ENCODE measurements at regions of chr2 and their contacts with region 1.

Region 1: GRCh38 chr2:171999604-172000469 is at the start of gene METAP1D:
- DNase-seq: peak; percentile 91
- ATAC-seq: peak; percentile 100
- H3K4me3 ChIP-seq: peak within 1 kb of the TSS; percentile 59 to 80 (median 66)
- H3K27ac ChIP-seq: peak within 1 kb of the TSS; percentile 82
- H3K4me1 ChIP-seq: peaks cover 21% of the 10 kb centered on the region
- H3K27me3 ChIP-seq: no peaks in the 10 kb centered on the region
- CTCF ChIP-seq: peak; percentile 36; the same call in 1 of the 2 replicates
- EP300 ChIP-seq: peak in 1 of 2 experiments; percentile 50; a peak in 1 of 4 replicates
- POLR2A ChIP-seq: peak; percentile 98
- RAD21 ChIP-seq: peak; percentile 89
- total RNA-seq, gene METAP1D: 14.0 and 14.7 TPM in 2 replicates

Region 2: GRCh38 chr2:171811245-171811628 is 188.6 kb before region 1 on chr2:
- CTCF ChIA-PET with region 1: no interaction called
- POLR2A ChIA-PET with region 1: no interaction called
- in situ Hi-C with region 1: no loop called
- intact Hi-C with region 1: no loop called
- DNase-seq: peak; percentile 26
- ATAC-seq: no peak
- H3K4me3 ChIP-seq: no peak overlapping the region
- H3K27ac ChIP-seq: no peak overlapping the region
- H3K4me1 ChIP-seq: peaks cover 24% of the 10 kb centered on the region
- H3K27me3 ChIP-seq: no peaks in the 10 kb centered on the region
- CTCF ChIP-seq: peak; percentile 74
- EP300 ChIP-seq: no peak
- POLR2A ChIP-seq: no peak
- RAD21 ChIP-seq: peak; percentile 54; the same call in 1 of the 2 replicates

Region 3: DNA sequence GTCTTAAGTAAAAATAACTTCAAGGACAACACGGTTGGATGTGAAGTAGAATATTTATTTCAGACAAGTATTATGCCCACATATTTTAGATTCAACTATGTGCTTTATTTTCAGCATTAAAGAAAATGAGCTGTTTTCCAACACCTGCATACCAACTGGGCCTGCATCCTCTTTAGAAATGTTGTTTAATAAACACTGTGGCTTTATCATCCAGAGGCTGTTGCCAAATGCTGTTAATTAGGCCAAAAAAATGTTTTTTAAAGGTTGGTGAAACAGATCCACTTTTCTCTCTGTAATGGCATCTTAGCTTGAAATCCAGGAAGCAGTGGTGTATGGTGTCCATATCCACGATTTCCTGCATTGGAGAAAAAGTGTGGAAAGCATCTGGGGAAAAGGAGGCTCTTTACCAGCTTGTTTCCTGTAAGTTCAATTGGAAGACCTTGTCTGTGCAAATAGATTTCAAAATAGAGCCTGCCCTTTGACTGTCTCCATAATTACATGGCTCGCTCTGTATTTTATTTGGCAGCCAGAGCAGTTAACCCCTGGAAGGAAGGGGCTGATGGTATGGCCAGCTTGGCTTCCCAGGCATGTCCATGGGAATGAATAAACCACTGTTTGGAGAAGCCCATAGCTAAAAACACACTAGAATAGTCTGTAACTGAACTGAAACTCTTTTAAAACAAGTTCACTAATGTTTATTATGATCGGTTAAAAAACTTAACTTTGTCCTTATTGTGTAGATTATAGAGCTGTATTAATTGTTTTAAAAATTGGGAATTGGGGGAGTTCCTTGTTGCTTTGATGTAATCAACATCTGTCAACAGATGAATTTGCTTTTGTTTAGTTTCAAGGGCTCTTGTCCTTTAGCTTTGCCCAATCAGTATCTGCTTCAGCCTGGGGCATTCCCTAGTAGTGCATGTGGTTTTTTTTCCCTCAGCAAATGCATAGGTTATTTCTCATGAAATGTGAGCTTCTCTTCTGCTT is 52.5 kb after region 1 on chr2:
- CTCF ChIA-PET with region 1: no interaction called
- POLR2A ChIA-PET with region 1: no interaction called
- in situ Hi-C with region 1: no loop called
- intact Hi-C with region 1: loop called (anchors 10 kb)
- DNase-seq: peak; percentile 98
- ATAC-seq: peak; percentile 98
- H3K4me3 ChIP-seq: peak overlapping the region; percentile 5 to 32 (median 28); a peak in 4 of 6 replicates
- H3K27ac ChIP-seq: peak overlapping the region; percentile 60
- H3K4me1 ChIP-seq: peaks cover 63% of the 10 kb centered on the region
- H3K27me3 ChIP-seq: no peaks in the 10 kb centered on the region
- CTCF ChIP-seq: no peak
- EP300 ChIP-seq: peak; percentile 86 to 96; a peak in 3 of 4 replicates
- POLR2A ChIP-seq: no peak
- RAD21 ChIP-seq: peak; percentile 55

Measured in HepG2 (cell line).